ENCODE measurements at regions of chr11 and their contacts with region 1.

Region 1: DNA sequence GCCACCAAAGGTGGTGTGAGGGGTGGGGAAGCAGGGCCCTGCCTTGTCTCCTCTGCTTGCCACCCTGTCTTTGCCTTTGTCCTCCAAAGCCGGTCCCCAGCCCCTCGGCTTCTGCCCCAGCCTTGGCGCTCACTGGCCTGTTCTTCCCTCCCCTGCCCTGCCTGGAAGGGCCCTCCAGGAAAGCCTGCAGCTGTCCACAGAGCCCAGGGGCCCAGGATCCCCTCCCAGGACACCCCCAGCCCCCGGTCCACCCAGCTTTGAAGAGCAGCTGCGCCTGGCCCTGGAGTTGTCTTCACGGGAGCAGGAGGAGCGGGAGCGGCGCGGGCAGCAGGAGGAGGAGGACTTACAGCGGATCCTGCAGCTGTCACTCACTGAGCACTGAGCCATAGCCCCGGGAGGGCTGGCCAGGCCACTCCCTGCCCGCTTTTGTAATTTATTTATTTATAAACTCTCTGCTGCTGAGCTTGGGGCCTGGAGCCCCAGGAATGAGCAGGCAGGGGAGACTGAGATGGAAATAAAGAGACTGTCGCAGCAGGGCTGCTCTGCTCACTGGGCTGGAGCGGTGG is 1.3 kb upstream of the SSH3 start:
- DNase-seq: no peak
- ATAC-seq: peak; percentile 74
- H3K4me3 ChIP-seq: peak overlapping the region; percentile 74 to 85; a peak in 3 of 4 replicates
- H3K27ac ChIP-seq: peak overlapping the region; percentile 83
- H3K4me1 ChIP-seq: peaks cover 27% of the 10 kb centered on the region
- H3K27me3 ChIP-seq: no peaks in the 10 kb centered on the region
- CTCF ChIP-seq: no peak

Region 2: DNA sequence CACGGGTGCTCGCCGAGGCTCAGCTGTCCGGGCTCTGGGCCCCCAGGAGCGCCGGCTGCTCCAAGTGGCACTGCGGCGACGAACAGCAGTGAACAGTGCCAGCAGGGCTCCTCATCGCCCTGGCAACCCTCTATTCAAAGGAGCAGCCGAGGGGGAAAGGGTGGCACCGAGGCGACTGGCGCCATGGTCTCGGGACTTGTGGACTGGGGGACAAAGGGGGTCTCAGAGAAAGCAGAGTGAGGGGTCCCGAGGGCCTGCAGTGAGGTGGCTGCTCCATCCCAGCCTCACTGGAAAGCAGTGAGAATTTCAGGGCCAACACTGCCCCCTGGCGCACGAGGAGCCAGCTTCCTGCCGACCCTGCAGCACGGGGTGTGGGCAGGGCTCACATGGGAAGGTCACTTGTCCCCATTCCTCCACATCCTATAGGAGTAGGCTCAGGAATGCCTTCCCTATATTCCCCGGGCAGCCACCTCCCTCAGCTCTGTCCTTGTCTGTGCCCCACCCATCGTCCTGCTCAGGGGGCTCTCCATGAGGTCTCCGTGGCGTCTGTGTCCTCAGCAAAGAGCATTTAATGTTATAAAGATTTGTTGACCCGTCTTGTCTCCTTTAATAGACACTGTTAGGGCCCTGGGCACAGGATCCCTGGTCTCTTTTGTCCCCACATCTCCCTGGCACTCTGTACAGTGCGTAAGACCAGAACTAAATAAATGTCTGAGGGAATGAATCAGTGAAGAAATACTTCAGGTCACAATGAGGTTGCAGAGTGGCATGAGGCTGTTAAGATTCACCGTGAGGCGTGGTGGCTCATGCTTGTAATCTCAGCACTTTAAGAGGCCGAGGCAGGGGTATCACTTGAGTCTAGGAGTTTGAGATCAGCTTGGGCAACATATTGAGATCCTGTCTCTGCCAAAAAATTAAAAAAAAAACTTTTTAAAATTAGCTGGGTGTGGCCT is 418.7 kb before region 1 on chr11:
- CTCF ChIA-PET with region 1: no interaction called
- POLR2A ChIA-PET with region 1: no interaction called
- in situ Hi-C with region 1: no loop called
- intact Hi-C with region 1: no loop called
- DNase-seq: peak; percentile 73
- ATAC-seq: peak; percentile 94
- H3K4me3 ChIP-seq: 0 out of 4 replicates have a peak overlapping the region, but pooled peaks have one; percentile 1 to 24
- H3K27ac ChIP-seq: peak overlapping the region; percentile 70
- H3K4me1 ChIP-seq: peaks cover 32% of the 10 kb centered on the region
- H3K27me3 ChIP-seq: no peaks in the 10 kb centered on the region
- CTCF ChIP-seq: peak; percentile 96

Region 3: DNA sequence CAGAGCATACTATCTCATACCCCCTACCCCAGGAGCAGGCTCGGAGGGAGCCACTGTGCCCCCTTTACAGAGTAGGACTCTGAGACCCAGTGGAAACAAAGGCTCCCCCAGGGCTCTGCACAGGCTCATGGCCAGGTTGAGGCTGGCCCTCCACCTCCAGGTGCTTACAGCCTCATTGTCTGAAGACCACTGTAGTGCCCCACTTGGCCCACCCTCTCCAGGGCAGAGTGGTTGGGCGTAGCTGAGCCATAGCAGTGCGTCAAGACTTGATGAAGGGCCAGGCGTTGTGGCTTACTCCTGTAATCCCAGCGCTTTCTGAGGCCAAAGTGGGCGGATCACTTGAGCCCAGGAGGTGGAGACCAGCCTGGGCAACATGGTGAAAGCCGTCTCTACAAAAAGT is 11.2 kb before region 1 on chr11:
- CTCF ChIA-PET with region 1: no interaction called
- POLR2A ChIA-PET with region 1: interaction called, 11 read pairs
- in situ Hi-C with region 1: no loop called
- intact Hi-C with region 1: no loop called
- DNase-seq: no peak
- ATAC-seq: no peak
- H3K4me3 ChIP-seq: peak overlapping the region in 1 of 2 experiments; percentile 59; a peak in 1 of 4 replicates
- H3K27ac ChIP-seq: peak overlapping the region; percentile 88; the same call in 1 of the 2 replicates
- H3K4me1 ChIP-seq: peaks cover 18% of the 10 kb centered on the region
- H3K27me3 ChIP-seq: no peaks in the 10 kb centered on the region
- CTCF ChIP-seq: no peak